HEK293T (cell line): ENCODE measurements at regions of chr2 and their contacts with region 1.

Region 1: DNA sequence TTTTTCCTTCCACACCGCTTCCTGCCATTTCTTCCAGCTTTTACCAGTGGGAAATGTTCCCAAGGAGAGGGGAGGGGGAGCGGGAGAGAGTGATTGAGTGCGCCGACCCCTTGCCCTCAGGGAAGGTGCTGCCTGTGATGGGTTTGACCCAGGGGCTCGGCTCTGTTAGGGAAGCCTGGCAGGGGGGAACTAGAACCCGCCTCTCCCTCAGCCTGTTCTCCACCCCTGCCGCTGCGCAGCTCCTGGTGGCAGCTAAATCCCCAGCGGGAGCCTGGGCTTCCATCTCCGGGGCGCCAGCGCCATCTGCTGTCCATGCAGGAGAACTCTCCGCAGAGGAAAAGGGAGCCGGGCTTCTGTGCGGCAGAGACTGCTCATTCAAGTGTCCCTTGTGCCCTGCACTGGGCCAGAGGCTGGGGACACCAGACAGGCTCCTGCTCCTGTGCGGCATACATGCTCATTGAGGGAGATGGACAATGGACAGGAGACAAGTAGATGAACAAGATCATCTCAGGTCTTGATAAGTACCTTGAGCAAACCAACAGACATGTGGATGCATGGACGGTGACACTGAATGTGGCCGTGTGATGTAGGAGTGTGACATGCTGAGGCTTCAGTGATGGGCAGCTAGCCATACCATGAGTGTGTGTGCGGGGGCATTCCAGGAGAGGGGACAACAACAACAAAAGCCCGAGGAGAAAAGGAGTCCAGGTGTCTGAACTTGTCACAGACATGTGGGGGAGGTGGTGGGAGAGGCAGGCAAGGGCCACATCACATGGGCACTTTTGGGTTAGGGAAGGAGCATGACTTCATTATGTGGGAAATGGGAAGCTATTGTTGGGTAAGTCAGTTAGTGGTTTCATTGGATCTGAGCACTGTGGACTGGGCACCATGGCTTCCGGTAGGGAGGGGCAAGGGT is 13.3 kb downstream of the CHPF start:
- DNase-seq: peak; percentile 90

Region 2: GRCh38 chr2:219402665-219403515 is 127.4 kb before region 1 on chr2:
- CTCF ChIA-PET with region 1: interaction called, 28 read pairs
- POLR2A ChIA-PET with region 1: interaction called, 3 read pairs
- DNase-seq: peak; percentile 82

Region 3: GRCh38 chr2:219475697-219476651 is 54.3 kb before region 1 on chr2:
- CTCF ChIA-PET with region 1: interaction called, 12 read pairs
- POLR2A ChIA-PET with region 1: no interaction called
- DNase-seq: peak; percentile 82

Region 4: DNA sequence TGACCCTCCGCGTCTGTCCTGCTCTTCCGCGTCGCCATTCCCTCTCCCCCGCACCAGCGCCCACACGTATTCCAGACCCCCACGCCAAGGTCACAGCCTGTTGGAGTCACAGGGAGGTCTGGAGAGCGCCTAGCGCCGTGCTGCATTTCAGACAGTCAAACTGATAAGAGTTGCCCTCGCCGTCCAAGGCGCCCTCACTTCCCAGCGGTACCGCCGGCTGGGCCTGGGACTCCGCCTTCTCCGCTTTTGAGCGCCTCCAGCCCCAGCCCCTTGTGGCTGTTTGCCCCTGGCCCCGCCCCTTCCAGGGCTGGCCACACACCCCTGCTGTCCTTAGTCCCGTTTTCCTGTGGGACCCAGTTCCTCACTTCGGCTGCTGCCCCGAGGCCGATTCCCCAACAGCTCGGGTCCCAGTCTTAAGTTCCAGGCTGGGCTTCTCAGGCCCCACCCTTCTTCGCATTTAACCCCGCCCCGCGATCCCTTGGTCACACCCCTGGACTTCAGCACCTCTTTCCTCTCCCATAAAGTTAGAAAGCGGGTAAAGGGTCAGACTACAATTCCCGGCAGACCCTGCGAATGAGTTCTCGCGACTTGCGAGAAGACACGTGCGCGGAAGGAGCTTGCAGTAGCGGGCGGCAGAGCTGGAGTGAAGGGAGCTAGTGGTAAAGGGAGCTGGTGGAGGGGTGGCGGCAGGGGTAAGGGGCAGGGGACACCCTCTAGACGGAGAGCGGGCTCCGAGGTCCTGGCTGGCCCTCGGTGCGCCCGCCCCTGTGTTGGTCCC is 31.8 kb before region 1 on chr2 and contains the start of gene GMPPA:
- CTCF ChIA-PET with region 1: interaction called, 50 read pairs
- POLR2A ChIA-PET with region 1: interaction called, 6 read pairs
- DNase-seq: peak; percentile 94

Region 5: GRCh38 chr2:219541611-219542180 is 11.4 kb after region 1 on chr2:
- CTCF ChIA-PET with region 1: interaction called, 11 read pairs
- POLR2A ChIA-PET with region 1: interaction called, 7 read pairs
- DNase-seq: peak; percentile 79

Region 6: GRCh38 chr2:219597552-219598307 is 67.4 kb after region 1 on chr2 and contains the start of gene STK11IP:
- CTCF ChIA-PET with region 1: no interaction called
- POLR2A ChIA-PET with region 1: no interaction called
- DNase-seq: peak; percentile 96